Calu3 (cell line): ENCODE measurements at regions of chr2 and their contacts with region 1.

Region 1: GRCh38 chr2:234425619-234426603 is 71.0 kb downstream of the ARL4C start:
- DNase-seq: no peak
- H3K4me3 Mint-ChIP-seq: no peak overlapping the region
- H3K27ac Mint-ChIP-seq: peak overlapping the region; percentile 79
- H3K4me1 Mint-ChIP-seq: peaks cover 55% of the 10 kb centered on the region
- H3K27me3 Mint-ChIP-seq: no peaks in the 10 kb centered on the region
- CTCF ChIP-seq: no peak

Region 2: DNA sequence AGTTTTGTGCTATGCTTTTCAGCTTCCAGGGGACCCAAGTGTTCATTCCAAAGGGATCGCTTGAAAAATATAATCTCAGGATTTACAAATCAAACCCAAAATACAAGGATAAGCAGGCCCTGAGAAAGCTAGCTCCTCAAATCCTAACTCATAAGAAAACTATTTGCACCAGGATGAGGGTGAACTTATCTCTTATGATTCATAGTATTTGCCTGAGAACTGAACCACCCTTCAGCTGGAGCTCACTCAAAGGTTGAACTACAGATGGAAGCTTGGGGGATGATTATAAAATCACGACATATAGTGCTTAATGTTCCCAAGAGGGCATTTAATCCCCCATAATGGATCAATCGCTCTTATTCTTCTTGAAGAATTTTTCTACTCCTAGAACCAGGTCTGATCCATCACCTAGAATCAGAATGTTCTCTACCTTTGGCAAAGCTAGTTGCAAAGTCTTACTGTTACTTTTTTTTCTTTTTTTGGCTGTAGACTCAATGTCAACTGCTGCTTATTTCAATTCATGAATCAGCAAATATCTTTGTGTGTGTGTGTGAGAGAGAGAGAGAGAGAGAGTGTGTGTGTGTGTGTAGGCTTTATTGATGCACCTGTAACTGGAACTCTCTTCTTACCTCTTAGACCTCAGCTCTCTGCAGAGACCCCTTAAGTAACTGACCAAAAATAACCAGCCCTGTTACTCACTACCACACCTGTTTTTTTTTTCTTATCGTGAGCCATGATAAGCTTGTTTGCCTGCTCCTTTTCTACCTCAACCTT is 26.1 kb after region 1 on chr2:
- CTCF ChIA-PET with region 1: no interaction called
- intact Hi-C with region 1: no loop called
- DNase-seq: no peak
- H3K4me3 Mint-ChIP-seq: no peak overlapping the region
- H3K27ac Mint-ChIP-seq: peak overlapping the region; percentile 68
- H3K4me1 Mint-ChIP-seq: peaks cover 19% of the 10 kb centered on the region
- H3K27me3 Mint-ChIP-seq: no peaks in the 10 kb centered on the region
- CTCF ChIP-seq: no peak

Region 3: DNA sequence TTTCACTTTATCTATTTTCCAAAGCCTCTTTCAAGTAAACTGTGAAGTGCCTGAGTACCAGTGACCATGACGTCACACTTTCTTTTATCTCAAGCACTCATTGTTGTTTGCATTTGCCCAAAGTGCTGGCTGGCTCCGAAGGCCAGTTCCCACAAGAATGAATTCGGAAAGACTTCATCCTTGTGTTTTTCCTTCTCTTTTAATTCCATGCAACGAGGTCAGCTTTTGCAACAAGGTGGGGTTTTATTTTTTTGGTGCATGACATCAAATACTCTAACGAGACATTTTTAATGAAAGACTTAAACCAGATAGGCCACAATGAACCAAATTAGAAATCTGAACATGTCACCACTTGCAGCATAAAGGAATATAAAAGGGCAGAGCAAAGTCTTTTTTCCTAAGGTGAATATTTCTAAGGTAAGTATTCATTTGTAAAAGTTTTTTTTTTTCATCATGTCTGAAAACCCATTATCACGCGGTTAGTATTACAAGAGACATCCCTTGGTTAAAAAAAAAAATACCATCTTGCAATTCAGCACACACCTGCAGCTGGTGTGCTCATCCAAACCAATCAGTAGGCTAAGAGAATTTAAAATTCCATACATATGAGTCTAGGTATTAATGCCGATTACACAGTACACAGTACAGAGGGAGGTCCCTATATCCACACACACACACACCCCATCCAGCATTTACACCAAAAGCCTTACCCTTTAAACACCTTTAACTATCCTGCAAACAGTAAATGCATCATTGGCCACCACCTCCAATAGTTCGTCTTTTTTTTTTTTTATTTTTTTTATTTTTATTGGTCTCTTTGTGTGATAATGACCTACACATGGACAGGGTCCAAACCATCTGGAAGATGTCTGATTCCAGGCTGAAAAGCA is 68.7 kb after region 1 on chr2:
- CTCF ChIA-PET with region 1: no interaction called
- intact Hi-C with region 1: loop called (anchors 5 kb)
- DNase-seq: no peak
- H3K4me3 Mint-ChIP-seq: peak overlapping the region; percentile 85
- H3K27ac Mint-ChIP-seq: peak overlapping the region; percentile 81
- H3K4me1 Mint-ChIP-seq: peaks cover 18% of the 10 kb centered on the region
- H3K27me3 Mint-ChIP-seq: no peaks in the 10 kb centered on the region
- CTCF ChIP-seq: no peak